Panc1 (cell line): ENCODE measurements at regions of chr6 and their contacts with region 1.

Region 1: GRCh38 chr6:109015176-109015575 is 79.5 kb downstream of the SESN1 start:
- DNase-seq: no peak
- ATAC-seq: no peak
- H3K4me3 ChIP-seq: no peak overlapping the region
- H3K27ac ChIP-seq: no peak overlapping the region
- H3K4me1 ChIP-seq: peaks cover 8% of the 10 kb centered on the region
- H3K27me3 ChIP-seq: no peaks in the 10 kb centered on the region
- CTCF ChIP-seq: no peak

Region 2: GRCh38 chr6:108896111-108896661 is 119.0 kb before region 1 on chr6:
- CTCF ChIA-PET with region 1: interaction called, 13 read pairs
- POLR2A ChIA-PET with region 1: no interaction called
- in situ Hi-C with region 1: no loop called
- intact Hi-C with region 1: no loop called
- DNase-seq: no peak
- ATAC-seq: no peak
- H3K4me3 ChIP-seq: no peak overlapping the region
- H3K27ac ChIP-seq: no peak overlapping the region
- H3K4me1 ChIP-seq: no peaks in the 10 kb centered on the region
- H3K27me3 ChIP-seq: no peaks in the 10 kb centered on the region
- CTCF ChIP-seq: no peak